Ascending aorta (tissue), 2 donors: ENCODE measurements at regions of chr1 and their contacts with region 1.

Region 1: DNA sequence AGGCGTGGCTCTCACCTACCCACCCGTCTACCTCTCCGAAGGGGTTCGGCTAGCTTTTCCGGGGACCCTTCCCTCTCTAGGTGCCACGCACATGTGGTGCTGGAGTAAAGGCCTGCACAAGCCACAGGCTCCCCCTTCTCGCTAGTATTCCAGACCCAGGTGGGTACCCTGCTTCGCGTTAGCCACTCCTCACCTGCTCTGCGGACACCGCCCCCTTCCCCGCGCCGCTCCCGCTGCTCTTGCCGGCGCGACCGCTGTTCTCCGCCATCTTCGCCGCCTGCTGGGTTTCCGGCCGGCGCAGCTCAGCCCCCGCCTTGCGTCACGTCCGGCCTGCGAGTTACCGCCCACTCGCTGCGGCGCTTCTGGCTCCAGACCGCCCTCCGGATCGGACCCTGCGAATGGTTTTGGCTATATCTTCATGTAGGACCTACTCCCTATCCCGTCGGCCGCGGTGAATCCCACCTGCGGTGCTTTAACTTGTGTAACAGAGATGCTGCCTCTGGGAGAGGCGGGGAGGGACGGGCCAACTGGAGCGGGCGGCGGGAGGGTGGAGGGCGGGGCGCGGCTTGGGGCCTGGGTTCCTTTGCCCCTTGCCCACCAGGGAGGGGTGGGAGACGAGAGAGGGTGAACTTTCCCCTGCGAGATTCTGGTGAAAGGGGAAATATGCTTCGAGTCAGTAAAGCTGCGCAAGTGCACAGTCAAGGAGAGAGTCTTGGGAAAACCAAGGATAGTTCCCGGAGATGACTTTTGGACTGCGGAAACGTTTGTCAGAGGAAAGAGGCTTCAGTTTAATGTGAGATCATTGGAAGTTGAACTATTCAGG is at the starts of genes NIT1 and PFDN2:
- DNase-seq: peak; percentile 37 to 92
- H3K4me3 ChIP-seq: peak within 1 kb of the TSS; percentile 76 to 98
- H3K27ac ChIP-seq: peak within 1 kb of the TSS; percentile 94 to 98
- H3K4me1 ChIP-seq: peaks cover 10 to 26% of the 10 kb centered on the region in 2 donors
- H3K27me3 ChIP-seq: no peaks in the 10 kb centered on the region
- CTCF ChIP-seq: peak in 1 of 3 experiments; percentile 3
- total RNA-seq, gene NIT1: 44.9 TPM
- total RNA-seq, gene PFDN2: 16.3 TPM

Region 2: DNA sequence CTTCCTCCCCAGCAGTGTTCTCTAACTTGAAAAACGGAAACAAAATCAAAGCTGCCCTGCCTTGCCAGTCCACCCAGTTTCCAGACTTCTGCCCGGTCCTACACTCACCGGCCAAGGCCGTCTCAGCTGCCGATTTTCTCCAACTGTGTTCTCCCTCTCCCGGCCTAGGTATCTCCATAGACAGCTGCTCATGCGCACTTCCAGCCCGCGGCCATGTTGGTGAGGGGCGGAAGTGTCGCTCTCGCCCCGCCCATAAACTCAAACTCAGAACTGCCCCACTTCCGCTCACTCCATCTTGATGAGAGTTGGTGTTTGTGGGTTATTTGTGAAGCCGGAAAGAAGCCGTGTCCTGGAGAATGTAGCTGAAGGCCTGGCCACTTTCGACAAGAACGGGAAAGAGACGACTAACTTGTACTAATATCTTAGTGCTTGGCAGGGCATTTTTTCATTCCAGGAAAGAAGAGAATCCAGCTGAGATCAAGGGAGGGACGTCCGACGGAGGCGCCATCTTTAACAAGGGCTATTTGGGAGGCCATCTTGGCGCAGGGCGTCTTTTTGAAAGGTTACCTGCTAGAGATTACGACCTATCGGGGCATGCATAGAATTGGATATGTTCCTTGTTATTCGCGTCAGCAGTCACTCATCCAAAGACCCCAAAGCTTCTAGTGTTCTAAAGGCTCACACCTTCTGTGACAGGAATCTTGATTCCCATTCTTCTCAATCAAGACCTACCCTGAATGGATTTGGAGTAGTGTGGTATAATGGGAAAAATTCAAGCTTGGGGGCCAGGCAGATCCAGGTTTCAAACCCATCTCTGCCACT is 72.0 kb before region 1 on chr1 and contains the start of gene USF1:
- intact Hi-C with region 1: loop called (anchors 5 kb)
- DNase-seq: peak; percentile 79 to 97
- H3K4me3 ChIP-seq: peak within 1 kb of the TSS; percentile 63 to 95
- H3K27ac ChIP-seq: peak within 1 kb of the TSS; percentile 93 to 96
- H3K4me1 ChIP-seq: peaks cover 6 to 13% of the 10 kb centered on the region in 2 donors
- H3K27me3 ChIP-seq: no peaks in the 10 kb centered on the region
- CTCF ChIP-seq: no peak
- total RNA-seq, gene USF1: 68.5 TPM

Region 3: GRCh38 chr1:161153679-161154426 is 35.9 kb after region 1 on chr1 and contains the start of gene UFC1:
- intact Hi-C with region 1: loop called (anchors 2 kb)
- DNase-seq: peak in 1 of 2 donors; percentile 91
- H3K4me3 ChIP-seq: peak within 1 kb of the TSS; percentile 76 to 83
- H3K27ac ChIP-seq: peak within 1 kb of the TSS; percentile 91 to 93
- H3K4me1 ChIP-seq: peaks cover 0 to 13% of the 10 kb centered on the region in 2 donors
- H3K27me3 ChIP-seq: no peaks in the 10 kb centered on the region
- CTCF ChIP-seq: no peak
- total RNA-seq, gene UFC1: 3.3 TPM

Region 4: DNA sequence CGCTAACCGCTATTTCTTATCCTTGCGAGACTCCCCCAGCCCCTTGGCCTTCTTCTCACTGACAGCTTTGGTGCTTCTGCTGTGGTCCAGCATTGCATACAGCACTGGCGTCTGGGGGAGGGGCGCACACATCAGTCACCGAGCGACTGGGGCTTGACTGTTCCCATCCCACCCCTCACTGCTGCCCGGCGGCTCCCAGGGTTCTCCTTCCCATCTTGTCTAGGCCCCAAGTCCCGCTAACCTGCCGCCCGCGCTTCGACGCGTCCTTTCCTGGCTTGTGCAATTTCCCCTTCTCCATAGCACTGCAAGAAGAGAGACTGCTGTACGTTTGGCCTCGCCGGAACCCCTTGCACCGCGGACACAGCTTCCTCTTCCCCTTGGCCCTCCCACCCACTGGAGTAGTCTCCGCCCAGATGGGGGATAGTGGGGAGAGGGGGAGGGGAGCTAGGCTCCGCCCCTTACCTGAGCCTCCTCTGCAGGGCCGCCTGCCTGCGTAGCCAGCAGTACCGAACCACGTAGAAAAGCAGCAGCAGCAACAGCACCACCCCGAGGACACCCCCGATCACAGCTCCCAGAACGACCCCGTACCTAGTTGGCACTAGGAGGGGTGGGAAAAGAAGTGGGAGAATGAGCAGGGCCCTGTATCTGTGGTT is 188.0 kb after region 1 on chr1:
- intact Hi-C with region 1: no loop called
- DNase-seq: peak; percentile 33 to 86
- H3K4me3 ChIP-seq: peak overlapping the region; percentile 58 to 83
- H3K27ac ChIP-seq: peak overlapping the region in 1 of 2 donors; percentile 38
- H3K4me1 ChIP-seq: peaks cover 0 to 9% of the 10 kb centered on the region in 2 donors
- H3K27me3 ChIP-seq: no peaks in the 10 kb centered on the region
- CTCF ChIP-seq: peak in 1 of 3 experiments; percentile 16

Region 5: DNA sequence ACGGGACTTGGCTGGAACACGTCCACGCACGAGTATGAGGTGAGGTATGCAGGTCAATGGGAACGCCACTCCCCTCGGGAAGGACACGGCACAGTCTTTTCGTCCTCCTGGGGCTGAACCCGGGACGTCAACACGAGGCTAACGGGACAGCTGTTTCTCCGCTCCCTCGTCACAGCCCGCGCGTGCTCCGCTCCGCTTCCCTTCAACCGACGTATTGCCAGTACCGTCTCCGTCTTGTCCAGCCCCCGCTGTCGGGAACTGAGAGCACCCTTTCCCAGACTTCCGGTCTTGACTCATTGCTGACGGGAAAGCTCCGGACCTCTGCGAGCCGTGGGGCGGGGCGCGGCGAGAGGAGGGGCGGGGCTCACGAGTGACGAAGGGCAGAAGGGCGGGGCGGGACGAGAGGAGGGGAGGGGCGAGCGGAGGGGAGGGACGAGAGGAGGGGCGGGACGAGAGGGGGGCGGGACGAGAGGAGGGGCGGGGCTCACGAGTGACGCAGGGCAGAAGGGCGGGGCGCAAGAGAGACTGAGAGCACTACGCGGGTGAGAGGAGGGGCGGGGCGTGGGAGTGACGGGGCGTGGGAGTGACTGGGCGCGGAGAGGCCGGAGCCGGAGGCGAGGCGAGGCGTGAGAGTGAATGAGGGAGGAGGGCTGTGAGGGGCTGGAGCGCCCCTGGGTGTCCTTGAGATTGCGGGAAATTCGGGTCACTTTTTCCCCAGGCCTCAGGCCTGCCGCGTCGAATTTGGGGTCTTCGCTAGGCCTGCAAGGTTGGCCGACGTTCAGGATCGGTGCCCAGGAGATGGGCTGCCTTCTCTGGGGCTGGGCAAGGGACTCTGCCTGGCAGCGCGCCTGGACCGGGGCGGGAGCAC is 272.0 kb after region 1 on chr1:
- intact Hi-C with region 1: loop called (anchors 5 kb)
- DNase-seq: peak; percentile 95 to 99
- H3K4me3 ChIP-seq: peak overlapping the region; percentile 53 to 74
- H3K27ac ChIP-seq: peak overlapping the region; percentile 89 to 93
- H3K4me1 ChIP-seq: peaks cover 0 to 4% of the 10 kb centered on the region in 2 donors
- H3K27me3 ChIP-seq: no peaks in the 10 kb centered on the region
- CTCF ChIP-seq: no peak

Region 6: GRCh38 chr1:161481624-161482392 is 363.8 kb after region 1 on chr1:
- intact Hi-C with region 1: no loop called
- DNase-seq: no peak
- H3K4me3 ChIP-seq: no peak overlapping the region
- H3K27ac ChIP-seq: no peak overlapping the region
- H3K4me1 ChIP-seq: no peaks in the 10 kb centered on the region
- H3K27me3 ChIP-seq: no peaks in the 10 kb centered on the region
- CTCF ChIP-seq: no peak